Activated naive CD4-positive, alpha-beta T cell treated with anti-CD3 and anti-CD28 coated beads for 36 hours (primary cell): ENCODE measurements at regions of chr12 and their contacts with region 1.

Region 1: DNA sequence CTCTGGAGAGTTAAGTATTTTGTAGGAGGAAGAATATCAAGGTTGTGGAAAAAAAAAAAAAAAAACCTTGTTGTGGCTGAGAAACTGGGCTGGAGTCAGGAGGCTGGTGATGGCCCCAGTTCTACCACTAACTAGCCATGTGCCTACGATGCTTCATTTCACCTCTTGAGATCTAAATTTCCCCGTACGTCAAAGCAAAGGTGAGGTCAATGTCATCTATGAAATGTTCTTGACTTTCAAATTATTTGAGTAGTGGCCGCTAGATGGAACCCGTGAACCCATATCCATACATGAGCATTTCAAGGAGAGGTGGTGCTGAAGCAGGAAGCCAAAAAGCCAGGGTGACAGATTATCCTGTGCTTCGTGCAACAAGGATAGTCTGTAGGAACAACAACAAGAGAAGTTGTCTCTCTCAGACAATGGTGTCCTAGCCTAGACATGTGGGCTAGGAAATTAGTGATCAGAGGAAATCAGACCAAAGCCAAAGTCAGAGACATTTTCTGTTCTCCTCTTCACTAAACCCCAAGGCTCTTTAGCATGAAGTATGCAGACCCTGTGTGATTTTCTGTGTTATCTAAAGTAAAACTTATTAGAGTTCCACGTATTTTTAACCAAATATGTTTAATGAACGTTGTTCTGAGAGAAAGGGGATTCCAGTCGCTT is 95.5 kb upstream of the ETV6 start:
- DNase-seq: peak; percentile 79
- H3K4me3 Mint-ChIP-seq: no peak overlapping the region
- H3K27ac Mint-ChIP-seq: no peak overlapping the region
- H3K4me1 Mint-ChIP-seq: peaks cover 22% of the 10 kb centered on the region
- H3K27me3 Mint-ChIP-seq: no peaks in the 10 kb centered on the region

Region 2: GRCh38 chr12:10941916-10942607 is 611.9 kb before region 1 on chr12:
- CTCF ChIA-PET with region 1: no interaction called
- intact Hi-C with region 1: no loop called
- DNase-seq: peak; percentile 20
- H3K4me3 Mint-ChIP-seq: no peak overlapping the region
- H3K27ac Mint-ChIP-seq: no peak overlapping the region
- H3K4me1 Mint-ChIP-seq: no peaks in the 10 kb centered on the region
- H3K27me3 Mint-ChIP-seq: no peaks in the 10 kb centered on the region

Region 3: GRCh38 chr12:11446372-11446771 is 107.6 kb before region 1 on chr12:
- CTCF ChIA-PET with region 1: no interaction called
- intact Hi-C with region 1: no loop called
- DNase-seq: no peak
- H3K4me3 Mint-ChIP-seq: no peak overlapping the region
- H3K27ac Mint-ChIP-seq: no peak overlapping the region
- H3K4me1 Mint-ChIP-seq: no peaks in the 10 kb centered on the region
- H3K27me3 Mint-ChIP-seq: peaks cover 2% of the 10 kb centered on the region

Region 4: GRCh38 chr12:11500178-11500860 is 53.7 kb before region 1 on chr12:
- CTCF ChIA-PET with region 1: no interaction called
- intact Hi-C with region 1: loop called (anchors 2 kb)
- DNase-seq: peak; percentile 90
- H3K4me3 Mint-ChIP-seq: no peak overlapping the region
- H3K27ac Mint-ChIP-seq: no peak overlapping the region
- H3K4me1 Mint-ChIP-seq: peaks cover 6% of the 10 kb centered on the region
- H3K27me3 Mint-ChIP-seq: peaks cover 42% of the 10 kb centered on the region

Region 5: DNA sequence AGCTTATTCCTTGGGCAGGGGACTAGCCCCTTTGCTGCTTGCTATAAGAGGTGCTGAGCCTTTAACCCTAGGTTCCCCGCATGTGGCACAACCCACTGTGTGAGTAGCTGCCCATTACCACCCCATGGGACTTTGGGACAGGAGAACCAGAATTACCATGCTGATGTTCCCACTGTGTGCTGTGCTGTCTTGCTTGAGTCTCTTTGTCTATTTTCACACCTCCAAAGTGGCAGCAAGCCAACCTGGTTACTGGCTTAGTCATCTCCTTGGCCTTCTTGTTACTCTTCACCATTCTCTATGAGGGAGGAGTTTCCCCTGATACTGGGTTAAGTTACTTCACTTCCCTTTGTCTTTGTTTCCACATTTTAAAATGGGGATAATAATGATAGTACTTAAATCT is 22.1 kb after region 1 on chr12:
- CTCF ChIA-PET with region 1: interaction called, 15 read pairs
- intact Hi-C with region 1: loop called (anchors 1 kb)
- DNase-seq: peak; percentile 87
- H3K4me3 Mint-ChIP-seq: no peak overlapping the region
- H3K27ac Mint-ChIP-seq: no peak overlapping the region
- H3K4me1 Mint-ChIP-seq: peaks cover 19% of the 10 kb centered on the region
- H3K27me3 Mint-ChIP-seq: peaks cover 2% of the 10 kb centered on the region

Region 6: DNA sequence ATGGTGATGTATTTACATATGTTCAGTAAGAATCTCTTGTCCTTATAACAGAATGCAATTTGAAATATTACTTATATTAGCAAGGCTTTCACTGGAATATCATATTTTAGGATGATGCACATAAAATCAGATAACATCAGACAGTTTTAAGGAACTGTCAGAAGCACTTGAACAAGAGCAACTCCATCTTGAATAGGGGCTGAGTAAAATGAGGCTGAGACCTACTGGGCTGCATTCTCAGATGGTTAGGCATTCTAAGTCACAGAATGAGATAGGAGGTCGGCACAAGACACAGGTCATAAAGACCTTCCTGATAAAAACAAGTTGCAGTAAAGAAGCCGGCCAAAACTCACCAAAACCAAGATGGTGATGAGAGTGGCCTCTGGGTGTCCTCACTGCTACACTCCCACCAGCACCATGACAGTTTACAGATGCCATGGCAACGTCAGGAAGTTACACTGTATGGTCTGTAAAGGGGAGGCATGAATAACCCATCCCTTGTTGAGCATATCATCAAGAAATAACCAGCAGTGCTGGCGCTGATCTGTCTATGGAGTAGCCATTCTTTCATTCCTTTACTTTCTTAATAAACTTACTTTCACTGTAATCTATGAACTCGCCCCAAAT is 67.9 kb after region 1 on chr12:
- CTCF ChIA-PET with region 1: no interaction called
- intact Hi-C with region 1: loop called (anchors 2 kb)
- DNase-seq: peak; percentile 55
- H3K4me3 Mint-ChIP-seq: no peak overlapping the region
- H3K27ac Mint-ChIP-seq: no peak overlapping the region
- H3K4me1 Mint-ChIP-seq: peaks cover 2% of the 10 kb centered on the region
- H3K27me3 Mint-ChIP-seq: no peaks in the 10 kb centered on the region